ENCODE measurements at regions of chr1 and their contacts with region 1.

Region 1: GRCh38 chr1:108685529-108685928 is 6.6 kb upstream of the PRPF38B start:
- DNase-seq: no peak
- ATAC-seq: no peak
- H3K4me3 Mint-ChIP-seq: no peak overlapping the region
- H3K27ac Mint-ChIP-seq: no peak overlapping the region
- H3K4me1 Mint-ChIP-seq: peaks cover 6% of the 10 kb centered on the region
- H3K27me3 Mint-ChIP-seq: no peaks in the 10 kb centered on the region

Region 2: GRCh38 chr1:108669679-108670078 is 15.8 kb before region 1 on chr1:
- CTCF ChIA-PET with region 1: interaction called, 3 read pairs
- POLR2A ChIA-PET with region 1: no interaction called
- intact Hi-C with region 1: loop called in 1 of 2 experiments (anchors 2 kb)
- DNase-seq: peak; percentile 33
- ATAC-seq: peak; percentile 54
- H3K4me3 Mint-ChIP-seq: no peak overlapping the region
- H3K27ac Mint-ChIP-seq: peak overlapping the region; percentile 39
- H3K4me1 Mint-ChIP-seq: peaks cover 14% of the 10 kb centered on the region
- H3K27me3 Mint-ChIP-seq: peaks cover 2% of the 10 kb centered on the region

Measured in activated CD4-positive, alpha-beta T cell treated with anti-CD3 and anti-CD28 coated beads for 36 hours (primary cell).